ENCODE measurements at regions of chr16 and their contacts with region 1.

Region 1: GRCh38 chr16:361872-362701 is 8.3 kb downstream of the MRPL28 start:
- DNase-seq: peak; percentile 80
- ATAC-seq: peak; percentile 84

Region 2: GRCh38 chr16:106623-107324 is 255.3 kb before region 1 on chr16:
- intact Hi-C with region 1: loop called (anchors 5 kb)
- DNase-seq: no peak
- ATAC-seq: peak; percentile 64

Measured in Right ventricle myocardium superior (tissue), 1 donor.